Cardiac septum (tissue), 1 donor: ENCODE measurements at regions of chr2 and their contacts with region 1.

Region 1: DNA sequence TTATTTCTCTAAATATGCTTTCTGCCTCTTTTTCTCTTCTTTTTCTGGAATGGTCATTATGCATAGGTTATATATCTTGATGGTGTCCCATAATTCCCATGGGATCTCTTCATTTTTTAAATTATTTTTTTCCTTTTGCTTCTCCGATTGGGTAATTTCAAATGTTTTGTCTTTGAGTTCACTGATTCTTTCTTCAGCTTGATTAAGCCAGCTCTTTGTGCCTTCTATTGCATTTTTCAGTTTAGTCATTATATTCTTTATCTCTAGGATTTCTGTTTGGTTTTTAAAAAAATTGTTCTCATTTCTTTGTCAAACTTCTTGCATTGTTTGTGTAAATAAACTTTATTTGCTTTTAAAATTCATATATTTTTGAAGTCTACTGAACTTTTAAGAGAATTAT is 251.1 kb downstream of the INSIG2 start:
- DNase-seq: no peak

Region 2: GRCh38 chr2:118148809-118149208 is 190.6 kb before region 1 on chr2:
- intact Hi-C with region 1: loop called (anchors 5 kb)
- DNase-seq: no peak